Activated CD4-positive, alpha-beta T cell treated with anti-CD3 and anti-CD28 coated beads for 36 hours (primary cell): ENCODE measurements at regions of chr3 and their contacts with region 1.

Region 1: DNA sequence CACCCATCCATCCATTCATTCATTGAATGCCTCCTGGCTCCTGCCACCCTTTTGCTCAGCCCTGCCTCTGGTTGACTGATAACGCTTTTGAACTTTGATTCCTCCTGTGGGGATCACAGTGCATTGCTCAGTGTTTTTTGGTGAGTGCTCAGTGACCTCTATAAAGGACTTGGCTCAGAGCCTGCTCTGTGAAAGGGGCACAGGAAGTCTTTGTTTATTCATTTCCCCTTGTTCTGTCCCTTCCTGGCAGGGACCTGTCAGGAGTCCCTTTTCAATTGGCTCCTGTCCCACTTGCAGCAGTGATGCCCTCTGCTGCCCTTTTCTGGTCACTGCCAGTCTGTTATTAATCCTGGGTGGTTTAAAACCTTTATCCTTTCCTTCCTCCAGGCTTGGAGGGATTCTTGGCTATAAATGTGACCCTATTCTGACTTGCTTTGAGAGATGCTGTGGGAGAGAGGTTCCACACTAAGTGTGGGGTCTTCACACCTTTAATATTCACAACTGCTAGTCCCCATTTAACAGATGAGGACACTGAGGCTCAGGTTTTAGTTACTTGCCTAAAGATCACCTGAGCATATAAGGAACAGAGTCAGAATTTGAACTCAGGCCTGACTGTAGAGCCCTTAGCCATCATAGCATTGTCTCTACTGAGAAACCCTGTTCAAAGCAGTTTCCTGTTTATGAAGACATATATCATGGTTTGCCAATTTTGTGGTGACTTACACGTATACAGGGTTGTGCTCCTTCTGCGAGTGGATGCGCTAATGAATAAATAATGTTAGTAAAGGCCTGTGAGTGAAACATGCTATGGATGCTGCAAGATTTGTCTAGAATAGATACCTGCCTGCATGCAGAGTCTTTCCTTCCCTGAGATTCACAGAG is 23.2 kb upstream of the TATDN2 start:
- DNase-seq: peak; percentile 83
- ATAC-seq: peak; percentile 72
- H3K4me3 Mint-ChIP-seq: no peak overlapping the region
- H3K27ac Mint-ChIP-seq: peak overlapping the region; percentile 83
- H3K4me1 Mint-ChIP-seq: peaks cover 69% of the 10 kb centered on the region
- H3K27me3 Mint-ChIP-seq: no peaks in the 10 kb centered on the region

Region 2: GRCh38 chr3:10142707-10143566 is 82.1 kb before region 1 on chr3:
- CTCF ChIA-PET with region 1: no interaction called
- POLR2A ChIA-PET with region 1: no interaction called
- intact Hi-C with region 1: loop called (anchors 1 to 2 kb)
- DNase-seq: peak; percentile 57
- ATAC-seq: peak; percentile 15
- H3K4me3 Mint-ChIP-seq: peak overlapping the region; percentile 97
- H3K27ac Mint-ChIP-seq: peak overlapping the region; percentile 89
- H3K4me1 Mint-ChIP-seq: peaks cover 28% of the 10 kb centered on the region
- H3K27me3 Mint-ChIP-seq: no peaks in the 10 kb centered on the region

Region 3: GRCh38 chr3:10164546-10165393 is 60.3 kb before region 1 on chr3 and contains the start of gene IRAK2:
- CTCF ChIA-PET with region 1: interaction called, 6 read pairs
- POLR2A ChIA-PET with region 1: no interaction called
- intact Hi-C with region 1: loop called (anchors 1 to 2 kb)
- DNase-seq: peak; percentile 83
- ATAC-seq: peak; percentile 79
- H3K4me3 Mint-ChIP-seq: peak within 1 kb of the TSS; percentile 70
- H3K27ac Mint-ChIP-seq: peak within 1 kb of the TSS; percentile 13
- H3K4me1 Mint-ChIP-seq: peaks cover 21% of the 10 kb centered on the region
- H3K27me3 Mint-ChIP-seq: no peaks in the 10 kb centered on the region
- total RNA-seq, gene IRAK2: 3.9 to 4.0 TPM

Region 4: GRCh38 chr3:10192953-10193691 is 31.9 kb before region 1 on chr3:
- CTCF ChIA-PET with region 1: interaction called, 9 read pairs
- POLR2A ChIA-PET with region 1: interaction called, 6 read pairs
- intact Hi-C with region 1: loop called (anchors 1 to 2 kb)
- DNase-seq: peak; percentile 85
- ATAC-seq: peak; percentile 45
- H3K4me3 Mint-ChIP-seq: peak overlapping the region; percentile 41
- H3K27ac Mint-ChIP-seq: peak overlapping the region; percentile 97
- H3K4me1 Mint-ChIP-seq: peaks cover 85% of the 10 kb centered on the region
- H3K27me3 Mint-ChIP-seq: no peaks in the 10 kb centered on the region

Region 5: GRCh38 chr3:10242182-10243065 is 17.4 kb after region 1 on chr3:
- CTCF ChIA-PET with region 1: interaction called, 9 read pairs
- POLR2A ChIA-PET with region 1: no interaction called
- intact Hi-C with region 1: loop called (anchors 1 kb)
- DNase-seq: peak; percentile 91
- ATAC-seq: peak; percentile 94
- H3K4me3 Mint-ChIP-seq: peak overlapping the region; percentile 42
- H3K27ac Mint-ChIP-seq: peak overlapping the region; percentile 93
- H3K4me1 Mint-ChIP-seq: peaks cover 62% of the 10 kb centered on the region
- H3K27me3 Mint-ChIP-seq: no peaks in the 10 kb centered on the region

Region 6: GRCh38 chr3:10263646-10264363 is 38.8 kb after region 1 on chr3:
- CTCF ChIA-PET with region 1: interaction called, 18 read pairs
- POLR2A ChIA-PET with region 1: no interaction called
- intact Hi-C with region 1: no loop called
- DNase-seq: peak; percentile 86
- ATAC-seq: peak; percentile 94
- H3K4me3 Mint-ChIP-seq: peak overlapping the region; percentile 59
- H3K27ac Mint-ChIP-seq: peak overlapping the region; percentile 91
- H3K4me1 Mint-ChIP-seq: peaks cover 85% of the 10 kb centered on the region
- H3K27me3 Mint-ChIP-seq: no peaks in the 10 kb centered on the region